ENCODE measurements at regions of chr10 and their contacts with region 1.

Region 1: DNA sequence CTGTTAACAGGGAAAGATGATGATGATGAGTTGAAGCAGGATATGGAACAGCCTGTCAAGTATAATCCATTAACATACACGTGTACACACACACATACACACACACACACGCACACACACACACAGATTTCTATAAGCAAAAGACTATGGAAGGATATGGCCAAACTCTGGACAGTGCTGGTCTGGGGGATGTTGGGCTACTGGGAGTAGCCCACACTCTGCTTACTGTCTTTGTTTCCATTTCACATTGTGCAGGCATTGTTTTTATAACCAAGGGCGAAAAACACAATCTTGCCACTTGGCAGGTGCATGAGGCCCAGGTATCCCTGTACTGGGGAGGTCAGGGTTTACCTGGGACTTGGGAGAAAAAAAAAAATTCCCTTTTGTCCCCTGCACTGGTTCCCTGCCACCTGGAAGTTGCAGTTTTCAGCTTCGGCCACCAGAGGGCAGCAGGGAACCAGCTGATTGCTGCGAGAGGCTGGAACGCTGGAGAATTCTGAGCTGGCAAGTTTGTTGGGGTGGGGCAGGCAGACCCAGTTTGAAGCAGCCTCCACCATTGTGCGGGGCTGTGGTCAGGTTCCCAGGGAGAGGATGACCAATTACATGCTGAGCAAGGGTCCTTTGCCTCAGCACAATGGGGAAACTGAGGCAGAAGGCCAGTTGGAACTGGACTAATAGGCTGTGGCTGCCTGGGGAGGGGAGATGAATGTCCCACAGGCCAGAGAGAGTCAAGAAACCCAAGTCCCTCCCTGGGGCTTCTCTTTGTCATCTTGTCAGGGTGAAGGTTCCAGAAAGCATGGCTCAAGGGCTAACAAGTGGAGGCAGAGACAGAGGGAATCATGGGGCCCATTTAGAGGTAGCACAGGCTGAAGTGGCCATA is 27.3 kb downstream of the PPIF start:
- DNase-seq: peak; percentile 62 to 85
- ATAC-seq: peak; percentile 77 to 92
- H3K4me3 ChIP-seq: no peak overlapping the region
- H3K27ac ChIP-seq: no peak overlapping the region; a peak in 1 of 6 replicates
- H3K4me1 ChIP-seq: peaks cover 5% of the 10 kb centered on the region; the same call in 1 of the 3 replicates
- CTCF ChIP-seq: peak; percentile 90
- EP300 ChIP-seq: no peak
- POLR2A ChIP-seq: no peak
- RAD21 ChIP-seq: peak; percentile 94 to 97

Region 2: GRCh38 chr10:79266543-79267312 is 107.8 kb before region 1 on chr10:
- CTCF ChIA-PET with region 1: no interaction called
- POLR2A ChIA-PET with region 1: no interaction called
- DNase-seq: no peak
- ATAC-seq: no peak
- H3K4me3 ChIP-seq: no peak overlapping the region
- H3K27ac ChIP-seq: peak overlapping the region in 1 of 2 experiments; percentile 18; a peak in 1 of 6 replicates
- H3K4me1 ChIP-seq: no peaks in the 10 kb centered on the region
- CTCF ChIP-seq: no peak
- EP300 ChIP-seq: no peak
- POLR2A ChIP-seq: no peak
- RAD21 ChIP-seq: no peak

Region 3: GRCh38 chr10:79390551-79391209 is 16.1 kb after region 1 on chr10:
- CTCF ChIA-PET with region 1: interaction called, 13 read pairs
- POLR2A ChIA-PET with region 1: no interaction called
- DNase-seq: no peak
- ATAC-seq: no peak
- H3K4me3 ChIP-seq: no peak overlapping the region
- H3K27ac ChIP-seq: no peak overlapping the region
- H3K4me1 ChIP-seq: no peaks in the 10 kb centered on the region
- CTCF ChIP-seq: no peak
- EP300 ChIP-seq: no peak
- POLR2A ChIP-seq: no peak
- RAD21 ChIP-seq: no peak

Region 4: DNA sequence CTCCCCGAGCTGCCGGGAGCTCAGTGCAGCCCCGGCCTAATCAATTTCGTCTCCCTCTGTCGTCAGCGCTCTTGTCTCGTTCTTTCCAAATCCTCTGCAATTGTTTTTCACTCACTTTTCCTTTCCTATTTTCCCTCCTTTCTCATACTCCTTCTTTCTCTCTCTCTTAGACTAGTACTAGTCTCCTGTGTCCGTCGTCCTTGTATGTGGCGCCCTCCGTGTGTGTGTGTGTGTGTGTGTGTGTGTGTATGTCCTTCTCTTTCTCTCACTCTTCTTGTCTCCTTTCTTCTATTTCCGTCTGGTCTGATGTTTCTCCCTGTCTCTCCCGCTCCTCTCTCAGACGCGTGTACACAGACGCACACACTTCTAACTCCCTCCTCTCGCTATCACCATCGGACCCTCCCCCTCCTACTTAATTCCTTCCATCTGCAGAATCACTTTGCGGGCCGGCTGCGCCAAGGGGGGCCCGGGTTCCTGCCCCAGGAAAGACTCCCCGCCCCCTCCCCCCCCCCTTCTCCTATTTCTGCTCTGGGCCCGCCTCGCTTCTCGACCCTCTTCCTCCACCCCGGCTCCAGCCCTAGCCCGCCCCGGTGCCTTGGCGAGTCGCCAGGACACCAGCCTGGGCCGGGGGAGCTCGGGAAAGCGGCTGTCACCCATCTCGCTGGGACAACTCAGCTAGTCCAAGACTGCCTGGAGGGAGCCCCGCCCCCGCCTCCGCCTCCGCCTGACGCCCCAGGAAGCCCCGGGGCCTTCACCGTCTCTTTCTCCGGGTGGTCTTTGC is 71.6 kb after region 1 on chr10:
- CTCF ChIA-PET with region 1: interaction called, 13 read pairs
- POLR2A ChIA-PET with region 1: no interaction called
- DNase-seq: peak in 1 of 2 experiments; percentile 27
- ATAC-seq: peak; percentile 16 to 22
- H3K4me3 ChIP-seq: peak overlapping the region; percentile 75
- H3K27ac ChIP-seq: peak overlapping the region; percentile 13 to 84; a peak in 4 of 6 replicates
- H3K4me1 ChIP-seq: peaks cover 22% of the 10 kb centered on the region
- CTCF ChIP-seq: no peak
- EP300 ChIP-seq: no peak
- POLR2A ChIP-seq: no peak
- RAD21 ChIP-seq: no peak

Region 5: DNA sequence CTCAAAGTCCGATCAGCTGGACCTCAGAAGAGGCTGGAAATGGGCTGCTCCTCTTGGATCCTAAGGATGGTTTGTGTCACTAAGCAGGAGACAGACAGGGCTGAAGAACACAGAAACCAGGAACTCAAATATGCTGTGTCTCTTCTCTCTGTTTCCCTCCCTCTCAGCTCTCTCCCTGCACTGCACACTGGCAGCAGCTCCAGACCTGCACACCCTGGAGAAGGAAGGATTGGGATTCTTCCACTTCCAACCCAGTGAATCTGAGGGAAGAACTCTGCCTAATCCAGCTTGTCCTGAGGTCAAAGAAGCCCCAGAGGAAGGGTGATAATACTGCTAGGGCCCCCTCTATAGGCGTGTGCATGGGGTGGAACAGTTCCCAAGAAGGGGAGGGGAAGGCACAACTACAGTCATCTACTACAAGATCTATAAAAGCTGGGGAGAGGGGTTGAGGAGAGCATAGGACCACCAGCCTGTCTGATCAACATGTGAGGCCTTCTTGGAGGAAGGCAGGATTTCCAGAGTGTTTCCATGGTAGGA is 93.5 kb after region 1 on chr10:
- CTCF ChIA-PET with region 1: interaction called, 27 read pairs
- POLR2A ChIA-PET with region 1: no interaction called
- DNase-seq: no peak
- ATAC-seq: peak in 1 of 2 experiments; percentile 38; a peak in 3 of 6 replicates
- H3K4me3 ChIP-seq: no peak overlapping the region
- H3K27ac ChIP-seq: no peak overlapping the region
- H3K4me1 ChIP-seq: no peaks in the 10 kb centered on the region
- CTCF ChIP-seq: no peak
- EP300 ChIP-seq: no peak
- POLR2A ChIP-seq: no peak
- RAD21 ChIP-seq: no peak

Region 6: DNA sequence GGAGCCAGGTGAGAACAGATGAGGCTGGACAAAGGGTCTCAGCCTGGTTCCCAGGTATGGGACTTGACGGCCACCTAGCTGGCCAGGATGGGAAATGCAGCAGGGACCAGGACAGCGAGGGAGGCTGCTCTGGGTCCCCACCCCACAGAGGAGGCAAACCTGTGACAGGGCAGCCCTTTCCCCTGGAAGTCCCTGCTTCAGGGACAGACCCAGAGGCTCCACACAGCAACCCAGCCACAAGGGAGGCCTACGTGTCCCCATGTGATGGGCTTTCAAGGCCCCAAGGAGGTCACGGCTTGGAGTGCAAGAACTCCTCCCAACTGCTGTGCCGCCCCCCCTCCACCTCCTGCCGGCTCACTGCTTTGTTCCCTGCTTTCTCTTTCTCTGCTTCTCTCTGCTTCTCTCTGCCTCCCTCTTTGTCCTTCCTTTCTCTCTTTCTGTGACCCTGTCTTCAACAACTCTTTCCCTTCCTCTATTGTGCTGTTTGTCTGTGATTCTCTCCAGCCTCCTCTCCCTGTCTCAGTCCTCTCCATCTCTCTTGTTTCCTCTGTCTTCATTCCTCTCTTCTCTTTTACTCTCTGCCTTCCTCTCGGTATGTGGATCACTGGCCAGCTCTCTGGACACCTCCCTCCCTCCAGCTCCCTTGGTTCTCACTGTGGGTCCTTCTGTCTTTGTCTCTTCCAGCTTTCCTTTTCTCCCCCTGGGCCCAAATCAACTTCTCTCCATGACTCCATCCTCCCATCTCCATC is 128.2 kb after region 1 on chr10:
- CTCF ChIA-PET with region 1: interaction called, 145 read pairs
- POLR2A ChIA-PET with region 1: no interaction called
- DNase-seq: peak in 1 of 2 experiments; percentile 30
- ATAC-seq: peak; percentile 90 to 96
- H3K4me3 ChIP-seq: no peak overlapping the region
- H3K27ac ChIP-seq: no peak overlapping the region
- H3K4me1 ChIP-seq: no peaks in the 10 kb centered on the region
- CTCF ChIP-seq: peak; percentile 52
- EP300 ChIP-seq: no peak
- POLR2A ChIP-seq: no peak
- RAD21 ChIP-seq: peak; percentile 74 to 78